Right lobe of liver (tissue), 6 donors: ENCODE measurements at regions of chr4 and their contacts with region 1.

Region 1: GRCh38 chr4:157978680-157979361 is 194.0 kb downstream of the GASK1B start:
- DNase-seq: peak in 2 of 3 donors; percentile 34 to 49
- ATAC-seq: peak; percentile 93 to 99 (median 96)
- H3K4me3 ChIP-seq: no peak overlapping the region
- H3K27ac ChIP-seq: no peak overlapping the region
- H3K4me1 ChIP-seq: no peaks in the 10 kb centered on the region
- H3K27me3 ChIP-seq: no peaks in the 10 kb centered on the region
- CTCF ChIP-seq: peak; percentile 75 to 83 (median 78)
- POLR2A ChIP-seq: no peak

Region 2: GRCh38 chr4:157220371-157220881 is 758.4 kb before region 1 on chr4 and contains the start of gene GRIA2:
- intact Hi-C with region 1: loop called in 1 of 2 experiments (anchors 10 kb)
- DNase-seq: peak; percentile 43 to 52 (median 46)
- ATAC-seq: peak; percentile 56 to 90 (median 74)
- H3K4me3 ChIP-seq: no peak within 1 kb of the TSS
- H3K27ac ChIP-seq: no peak within 1 kb of the TSS
- H3K4me1 ChIP-seq: peaks cover 0 to 4% (median 0%) of the 10 kb centered on the region in 4 donors
- H3K27me3 ChIP-seq: peaks cover 0 to 27% of the 10 kb centered on the region in 2 donors
- CTCF ChIP-seq: no peak
- POLR2A ChIP-seq: no peak
- total RNA-seq, gene GRIA2: not detected

Region 3: DNA sequence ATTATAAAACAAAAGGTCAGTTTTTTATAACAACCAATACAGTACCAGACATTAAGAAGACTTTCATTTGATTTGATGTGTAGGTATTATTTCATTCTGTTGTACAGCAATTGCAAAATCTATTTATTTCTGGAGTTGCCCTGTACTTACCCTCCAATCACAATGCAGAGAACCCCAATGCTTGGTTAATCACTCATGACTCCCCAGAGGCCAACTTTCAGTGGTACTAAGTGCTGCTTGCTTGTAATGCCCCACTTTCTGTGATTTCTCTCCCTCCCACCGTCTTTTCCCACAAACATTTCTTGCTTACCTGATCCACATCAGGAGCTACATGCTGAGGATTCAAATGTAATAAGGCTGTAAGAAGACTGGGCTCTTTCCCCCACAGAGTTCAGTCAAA is 60.4 kb before region 1 on chr4:
- intact Hi-C with region 1: no loop called
- DNase-seq: no peak
- ATAC-seq: no peak
- H3K4me3 ChIP-seq: no peak overlapping the region
- H3K27ac ChIP-seq: no peak overlapping the region
- H3K4me1 ChIP-seq: no peaks in the 10 kb centered on the region
- H3K27me3 ChIP-seq: no peaks in the 10 kb centered on the region
- CTCF ChIP-seq: no peak
- POLR2A ChIP-seq: no peak

Region 4: GRCh38 chr4:158051401-158052235 is 72.8 kb after region 1 on chr4:
- intact Hi-C with region 1: no loop called
- DNase-seq: no peak
- ATAC-seq: no peak
- H3K4me3 ChIP-seq: no peak overlapping the region
- H3K27ac ChIP-seq: no peak overlapping the region
- H3K4me1 ChIP-seq: no peaks in the 10 kb centered on the region
- H3K27me3 ChIP-seq: no peaks in the 10 kb centered on the region
- CTCF ChIP-seq: no peak
- POLR2A ChIP-seq: no peak

Region 5: DNA sequence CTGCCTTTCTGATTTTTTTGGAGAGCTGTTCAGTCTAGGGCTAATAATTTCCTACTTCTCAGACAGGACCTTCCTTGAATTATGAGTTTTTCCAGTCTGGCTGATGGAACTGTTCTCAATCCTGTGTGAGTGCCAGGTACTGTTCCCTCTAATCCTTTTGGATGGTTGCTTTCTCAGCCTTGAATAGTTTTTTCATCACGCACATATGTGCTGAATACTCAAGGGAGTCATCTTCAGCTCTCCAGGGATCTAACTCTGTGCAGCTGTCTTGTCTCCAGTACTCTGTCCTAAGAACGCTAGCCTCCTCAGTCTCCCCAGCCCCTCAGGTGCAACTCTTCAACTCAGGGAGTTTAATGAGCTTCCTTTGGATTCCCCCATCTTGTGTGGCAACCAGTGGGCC is 100.8 kb after region 1 on chr4:
- intact Hi-C with region 1: no loop called
- DNase-seq: no peak
- ATAC-seq: no peak
- H3K4me3 ChIP-seq: no peak overlapping the region
- H3K27ac ChIP-seq: no peak overlapping the region
- H3K4me1 ChIP-seq: no peaks in the 10 kb centered on the region
- H3K27me3 ChIP-seq: no peaks in the 10 kb centered on the region
- CTCF ChIP-seq: no peak
- POLR2A ChIP-seq: no peak